ENCODE measurements at regions of chr14 and their contacts with region 1.

Region 1: DNA sequence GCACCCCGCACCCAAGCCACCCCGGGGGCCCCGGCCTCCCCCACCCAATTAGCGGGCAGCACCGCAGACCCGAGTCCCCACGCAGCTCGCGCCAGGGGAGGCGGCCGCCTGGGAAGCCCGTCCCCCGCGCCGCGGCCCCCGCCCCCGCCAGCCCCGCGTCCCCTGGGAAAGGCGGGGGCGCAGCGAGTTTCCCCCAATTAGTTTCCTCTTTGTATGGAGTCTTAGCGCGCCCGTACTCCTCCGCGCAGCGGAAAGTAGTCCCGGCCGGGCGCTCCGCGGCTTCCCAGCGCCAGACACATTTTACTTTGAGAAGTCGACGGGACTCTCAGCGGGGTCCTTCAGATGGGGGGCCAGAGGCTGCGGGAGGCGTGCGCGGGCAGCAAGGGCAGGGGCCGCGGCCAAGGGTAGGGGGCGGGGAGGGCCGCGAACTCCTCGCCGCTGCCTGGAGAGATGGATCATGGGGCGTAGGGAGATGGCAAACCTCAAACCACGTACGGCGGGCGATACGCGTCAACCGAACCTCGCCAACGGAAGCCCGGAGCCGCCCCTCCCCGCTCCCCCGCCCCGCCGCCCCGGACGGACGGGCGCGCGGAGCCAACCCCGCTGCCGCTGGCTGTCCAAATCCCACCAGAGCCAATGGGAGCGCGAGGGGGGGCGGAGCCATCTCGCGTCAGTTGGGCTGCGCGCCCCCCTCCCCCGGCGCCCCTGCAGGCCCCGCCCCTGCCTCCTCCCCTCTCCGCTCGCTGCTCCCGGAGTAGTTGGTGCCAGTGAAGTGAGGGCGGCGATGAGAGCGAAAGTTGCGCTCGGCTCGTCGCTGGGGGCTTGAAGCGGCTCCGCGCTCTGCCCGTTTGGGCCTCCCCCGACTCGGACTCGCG is at the start of gene RCOR1:
- DNase-seq: peak; percentile 96
- H3K4me3 ChIP-seq: peak within 1 kb of the TSS; percentile 87 to 99 (median 92)
- H3K27ac ChIP-seq: peak within 1 kb of the TSS; percentile 92
- H3K4me1 ChIP-seq: peaks cover 11% of the 10 kb centered on the region
- H3K27me3 ChIP-seq: no peaks in the 10 kb centered on the region
- CTCF ChIP-seq: no peak
- total RNA-seq, gene RCOR1: 18.7 to 45.6 TPM

Region 2: GRCh38 chr14:101932673-101933072 is 659.5 kb before region 1 on chr14:
- CTCF ChIA-PET with region 1: no interaction called
- dilution Hi-C with region 1: no loop called
- in situ Hi-C with region 1: no loop called
- intact Hi-C with region 1: no loop called
- DNase-seq: no peak
- H3K4me3 ChIP-seq: no peak overlapping the region
- H3K27ac ChIP-seq: no peak overlapping the region
- H3K4me1 ChIP-seq: no peaks in the 10 kb centered on the region
- H3K27me3 ChIP-seq: no peaks in the 10 kb centered on the region
- CTCF ChIP-seq: no peak

Region 3: DNA sequence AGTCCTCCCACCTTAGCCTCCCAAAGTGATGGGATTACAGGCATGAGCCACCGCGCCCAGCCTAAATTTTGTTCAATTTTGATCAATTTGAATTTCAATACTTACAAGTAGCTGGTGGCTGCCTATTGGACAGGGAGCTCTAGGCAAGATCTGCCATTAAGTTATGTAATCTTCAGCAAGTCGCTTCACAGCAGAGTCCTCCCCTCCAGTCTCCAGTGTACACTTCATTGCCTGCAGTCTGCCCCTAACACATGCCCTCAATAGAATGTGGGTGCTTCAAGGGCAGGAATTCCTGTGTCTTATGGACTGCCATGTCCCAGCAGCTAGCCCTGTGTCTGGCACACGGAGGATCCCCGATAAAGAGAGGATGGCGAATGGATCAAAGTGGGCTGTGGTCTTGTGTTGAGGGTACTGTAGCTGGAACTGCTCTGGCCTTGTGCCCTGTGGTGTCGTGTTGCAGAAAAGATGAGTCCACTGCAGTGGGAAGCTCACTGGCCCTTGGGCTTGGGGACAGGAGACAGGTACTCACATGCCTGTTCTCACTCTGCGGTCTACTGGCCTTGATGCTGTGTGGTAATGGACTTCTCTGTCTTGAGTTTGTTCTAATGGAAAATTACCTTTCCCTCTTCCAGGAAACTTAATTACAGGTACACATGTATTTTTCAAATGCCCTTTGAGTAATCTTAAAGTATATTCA is 161.8 kb before region 1 on chr14:
- CTCF ChIA-PET with region 1: interaction called, 14 read pairs
- dilution Hi-C with region 1: no loop called
- in situ Hi-C with region 1: no loop called
- intact Hi-C with region 1: loop called (anchors 10 kb)
- DNase-seq: peak; percentile 60
- H3K4me3 ChIP-seq: no peak overlapping the region
- H3K27ac ChIP-seq: no peak overlapping the region
- H3K4me1 ChIP-seq: peaks cover 18% of the 10 kb centered on the region
- H3K27me3 ChIP-seq: no peaks in the 10 kb centered on the region
- CTCF ChIP-seq: no peak

Region 4: DNA sequence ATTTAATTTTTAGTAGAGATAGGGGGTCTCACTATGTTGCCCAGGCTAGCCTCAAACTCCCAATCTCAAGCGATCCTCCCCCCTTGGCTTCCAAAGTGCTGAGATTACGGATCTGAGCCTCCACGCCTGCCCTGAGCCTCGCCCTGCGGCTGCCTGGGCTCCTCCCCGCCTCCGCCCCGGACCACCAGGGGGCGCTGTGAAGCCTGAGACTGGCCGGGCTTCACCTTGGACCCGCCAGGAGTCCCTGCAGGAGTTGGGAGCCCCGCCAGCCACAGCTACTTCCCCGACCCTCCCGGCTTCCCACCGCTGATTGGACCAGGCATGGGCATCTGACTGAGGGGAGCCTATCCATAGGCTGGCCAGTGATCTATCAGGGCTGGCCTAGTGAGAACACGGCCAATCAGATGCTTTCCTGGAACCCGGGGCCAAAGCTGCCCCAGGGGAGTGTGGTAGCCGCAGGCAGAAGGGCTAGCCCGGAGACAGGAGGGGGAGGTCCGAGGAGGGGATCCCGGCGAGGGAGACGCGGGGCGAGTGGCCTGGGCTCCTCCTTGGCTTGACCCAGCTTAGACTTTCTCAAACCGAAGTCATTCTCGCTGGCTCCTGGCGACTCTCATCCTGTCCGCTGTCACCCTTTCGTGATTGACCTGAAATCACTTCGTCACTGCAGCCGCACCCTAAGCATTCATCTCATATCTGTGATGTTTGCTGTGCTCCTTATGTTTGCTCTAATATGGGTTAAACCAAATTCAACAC is 67.5 kb before region 1 on chr14:
- CTCF ChIA-PET with region 1: no interaction called
- dilution Hi-C with region 1: no loop called
- in situ Hi-C with region 1: no loop called
- intact Hi-C with region 1: loop called (anchors 1 kb)
- DNase-seq: peak; percentile 98
- H3K4me3 ChIP-seq: peak overlapping the region; percentile 32 to 74 (median 56)
- H3K27ac ChIP-seq: peak overlapping the region; percentile 84
- H3K4me1 ChIP-seq: peaks cover 33% of the 10 kb centered on the region
- H3K27me3 ChIP-seq: no peaks in the 10 kb centered on the region
- CTCF ChIP-seq: peak; percentile 83 to 96

Region 5: DNA sequence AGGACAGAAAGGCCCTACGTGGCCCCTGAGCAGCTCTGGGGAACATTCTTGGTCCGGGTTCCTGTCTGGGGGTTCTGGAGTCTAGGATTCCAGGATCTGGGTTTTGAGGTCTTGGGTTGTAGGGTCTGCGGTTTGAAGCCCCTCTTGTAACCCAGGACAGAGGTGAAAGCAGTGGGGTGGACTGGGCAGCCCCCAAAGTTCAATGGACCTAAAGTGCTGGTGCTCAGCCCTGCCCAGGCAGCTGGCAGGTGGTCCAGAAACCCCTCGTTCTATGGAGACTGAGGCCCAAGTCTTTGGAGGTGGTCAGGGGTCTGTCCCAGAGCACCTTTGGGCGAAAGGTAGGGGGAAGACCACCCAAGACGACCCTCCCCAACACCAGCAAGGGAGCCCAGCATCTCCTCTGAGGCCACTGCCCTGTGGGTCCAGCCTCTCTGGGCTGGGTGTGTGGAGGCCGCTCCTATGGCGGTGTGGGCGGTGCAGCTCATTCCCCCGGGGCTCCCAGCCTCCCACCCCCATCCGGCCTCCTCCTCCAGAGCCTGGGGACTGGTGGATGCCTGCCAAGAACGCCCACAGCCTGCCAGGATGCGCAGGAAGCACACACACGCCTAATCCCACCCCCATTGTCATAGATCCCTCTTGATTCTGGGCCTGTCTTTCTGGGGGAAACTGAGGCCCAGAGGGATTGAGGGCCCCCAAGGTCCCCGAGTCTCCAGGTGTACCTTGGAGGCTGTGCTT is 52.4 kb before region 1 on chr14:
- CTCF ChIA-PET with region 1: no interaction called
- dilution Hi-C with region 1: loop called (anchors 5 kb)
- in situ Hi-C with region 1: no loop called
- intact Hi-C with region 1: loop called (anchors 5 kb)
- DNase-seq: no peak
- H3K4me3 ChIP-seq: no peak overlapping the region
- H3K27ac ChIP-seq: no peak overlapping the region
- H3K4me1 ChIP-seq: peaks cover 27% of the 10 kb centered on the region
- H3K27me3 ChIP-seq: no peaks in the 10 kb centered on the region
- CTCF ChIP-seq: no peak

Region 6: GRCh38 chr14:102579696-102580334 is 12.3 kb before region 1 on chr14:
- CTCF ChIA-PET with region 1: no interaction called
- dilution Hi-C with region 1: no loop called
- in situ Hi-C with region 1: no loop called
- intact Hi-C with region 1: loop called (anchors 1 kb)
- DNase-seq: peak; percentile 69
- H3K4me3 ChIP-seq: no peak overlapping the region
- H3K27ac ChIP-seq: peak overlapping the region; percentile 55
- H3K4me1 ChIP-seq: peaks cover 17% of the 10 kb centered on the region
- H3K27me3 ChIP-seq: no peaks in the 10 kb centered on the region
- CTCF ChIP-seq: no peak

Measured in mammary epithelial cell (primary cell).